Dorsolateral prefrontal cortex (tissue), 120 donors: ENCODE measurements at regions of chr17 and their contacts with region 1.

Region 1: GRCh38 chr17:78428836-78429617 is 50.6 kb downstream of the PGS1 start:
- DNase-seq: no peak
- H3K4me3 ChIP-seq: no peak overlapping the region
- H3K27ac ChIP-seq: peak overlapping the region in 16 of 59 donors; percentile 4 to 95 (median 35)
- H3K27me3 ChIP-seq: no peaks in the 10 kb centered on the region
- CTCF ChIP-seq: no peak

Region 2: GRCh38 chr17:78289802-78290363 is 139.1 kb before region 1 on chr17:
- intact Hi-C with region 1: loop called in 1 of 2 experiments (anchors 5 kb)
- DNase-seq: peak; percentile 51 to 83 (median 72)
- H3K4me3 ChIP-seq: no peak overlapping the region
- H3K27ac ChIP-seq: no peak overlapping the region
- H3K27me3 ChIP-seq: no peaks in the 10 kb centered on the region
- CTCF ChIP-seq: peak; percentile 17 to 80 (median 69)

Region 3: GRCh38 chr17:78725448-78726021 is 296.5 kb after region 1 on chr17:
- intact Hi-C with region 1: no loop called
- DNase-seq: no peak
- H3K4me3 ChIP-seq: no peak overlapping the region
- H3K27ac ChIP-seq: peak overlapping the region in 57 of 59 donors; percentile 86 to 99 (median 97)
- H3K27me3 ChIP-seq: no peaks in the 10 kb centered on the region
- CTCF ChIP-seq: no peak